Pancreas (tissue), 10 donors: ENCODE measurements at regions of chr11 and their contacts with region 1.

Region 1: GRCh38 chr11:61787928-61788491 is 4.4 kb downstream of the TMEM258 start:
- DNase-seq: peak in 2 of 6 donors; percentile 45 to 60
- ATAC-seq: peak in 3 of 4 donors; percentile 7 to 26 (median 18)
- H3K4me3 ChIP-seq: no peak overlapping the region
- H3K27ac ChIP-seq: no peak overlapping the region
- H3K4me1 ChIP-seq: peaks cover 0 to 10% (median 0%) of the 10 kb centered on the region in 3 donors
- H3K27me3 ChIP-seq: no peaks in the 10 kb centered on the region
- CTCF ChIP-seq: peak; percentile 11 to 29 (median 19)

Region 2: GRCh38 chr11:61733120-61733978 is 54.7 kb before region 1 on chr11:
- intact Hi-C with region 1: no loop called
- DNase-seq: peak; percentile 76 to 94 (median 90)
- ATAC-seq: peak; percentile 73 to 94 (median 90)
- H3K4me3 ChIP-seq: no peak overlapping the region
- H3K27ac ChIP-seq: no peak overlapping the region
- H3K4me1 ChIP-seq: peaks cover 0 to 19% (median 5%) of the 10 kb centered on the region in 3 donors
- H3K27me3 ChIP-seq: no peaks in the 10 kb centered on the region
- CTCF ChIP-seq: peak; percentile 96 to 100 (median 99)

Region 3: DNA sequence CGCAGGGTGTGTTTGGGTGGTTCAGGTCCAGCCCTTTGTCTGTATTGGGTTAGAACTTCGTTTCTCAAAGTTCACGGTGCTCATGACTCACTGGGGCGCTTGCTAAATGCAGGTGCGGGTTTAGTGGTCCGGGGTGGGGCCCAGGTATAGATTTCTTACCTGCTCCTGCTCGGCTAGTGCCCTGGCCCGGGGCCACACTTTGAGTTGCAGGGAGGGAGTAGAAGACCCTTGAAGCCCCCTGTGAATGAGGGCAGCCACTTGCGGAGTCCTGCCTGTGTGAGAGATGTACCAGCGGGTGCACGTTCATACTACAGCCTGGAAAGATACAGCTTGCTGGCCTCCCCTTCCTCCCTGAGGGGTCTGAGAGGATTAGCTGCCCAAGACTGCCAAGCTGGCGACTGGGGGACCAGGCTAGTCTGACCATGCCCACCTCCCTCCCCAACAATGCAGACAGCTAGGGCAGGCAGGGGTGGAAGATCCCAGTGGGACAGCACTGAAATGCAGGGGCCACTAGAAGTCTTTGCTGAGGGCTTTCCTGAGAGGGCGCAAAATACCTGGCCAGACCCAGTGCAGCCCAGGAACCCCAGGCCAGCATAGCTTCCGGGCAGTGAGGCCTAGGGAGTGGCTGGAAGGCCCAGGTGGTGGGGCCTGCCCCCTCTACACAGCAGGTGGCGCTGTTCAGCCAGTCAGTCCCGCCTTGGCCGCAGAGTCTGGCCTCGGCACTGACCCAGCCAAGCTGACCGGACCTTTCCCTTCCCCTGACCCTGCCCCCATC is 40.6 kb before region 1 on chr11:
- intact Hi-C with region 1: loop called in 1 of 3 experiments (anchors 5 kb)
- DNase-seq: peak; percentile 75 to 94 (median 88)
- ATAC-seq: peak; percentile 78 to 92 (median 89)
- H3K4me3 ChIP-seq: no peak overlapping the region
- H3K27ac ChIP-seq: no peak overlapping the region
- H3K4me1 ChIP-seq: peaks cover 0 to 9% (median 0%) of the 10 kb centered on the region in 3 donors
- H3K27me3 ChIP-seq: no peaks in the 10 kb centered on the region
- CTCF ChIP-seq: peak; percentile 89 to 96 (median 94)

Region 4: DNA sequence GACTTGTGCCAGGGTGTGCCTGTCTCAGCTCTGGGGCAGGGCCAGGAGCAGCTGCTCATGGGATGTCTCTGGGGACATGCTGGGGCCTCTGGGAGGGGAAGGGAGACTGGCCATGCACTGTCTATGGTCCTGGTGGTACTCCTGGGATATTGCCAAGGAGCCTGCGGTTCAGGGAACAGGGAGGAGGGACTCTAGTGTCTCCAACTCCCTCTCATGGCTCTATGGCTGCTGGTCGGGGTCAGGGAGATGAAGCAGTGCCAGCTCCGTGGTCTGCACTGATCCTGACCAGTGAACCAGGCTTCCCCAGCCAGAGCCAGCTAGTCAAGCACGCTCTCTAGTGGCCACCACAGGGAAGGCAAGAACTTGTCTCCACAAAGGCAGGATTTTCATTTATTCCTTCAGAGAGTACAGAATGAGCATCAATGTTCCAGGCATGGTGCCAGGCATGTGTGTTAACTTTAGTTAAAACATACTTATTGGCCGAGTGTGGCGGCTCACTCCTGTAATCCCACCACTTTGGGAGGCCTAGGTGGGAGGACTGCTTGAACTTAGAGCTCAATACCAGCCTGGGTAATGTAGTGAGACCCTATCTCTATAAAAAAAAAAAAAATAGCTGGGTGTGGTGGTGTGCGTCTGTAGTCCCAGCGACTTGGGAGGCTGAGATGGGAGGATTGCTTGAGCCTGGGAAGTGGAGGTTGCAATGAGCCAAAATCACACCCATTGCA is 159.6 kb after region 1 on chr11:
- intact Hi-C with region 1: no loop called
- DNase-seq: peak; percentile 75 to 91 (median 86)
- ATAC-seq: peak; percentile 67 to 90 (median 85)
- H3K4me3 ChIP-seq: no peak overlapping the region
- H3K27ac ChIP-seq: no peak overlapping the region
- H3K4me1 ChIP-seq: peaks cover 11 to 18% (median 17%) of the 10 kb centered on the region in 3 donors
- H3K27me3 ChIP-seq: no peaks in the 10 kb centered on the region
- CTCF ChIP-seq: peak; percentile 73 to 76 (median 74)